Activated B cell treated with CpG ODN at 0.5 μM for 24 hours (primary cell): ENCODE measurements at regions of chr10 and their contacts with region 1.

Region 1: DNA sequence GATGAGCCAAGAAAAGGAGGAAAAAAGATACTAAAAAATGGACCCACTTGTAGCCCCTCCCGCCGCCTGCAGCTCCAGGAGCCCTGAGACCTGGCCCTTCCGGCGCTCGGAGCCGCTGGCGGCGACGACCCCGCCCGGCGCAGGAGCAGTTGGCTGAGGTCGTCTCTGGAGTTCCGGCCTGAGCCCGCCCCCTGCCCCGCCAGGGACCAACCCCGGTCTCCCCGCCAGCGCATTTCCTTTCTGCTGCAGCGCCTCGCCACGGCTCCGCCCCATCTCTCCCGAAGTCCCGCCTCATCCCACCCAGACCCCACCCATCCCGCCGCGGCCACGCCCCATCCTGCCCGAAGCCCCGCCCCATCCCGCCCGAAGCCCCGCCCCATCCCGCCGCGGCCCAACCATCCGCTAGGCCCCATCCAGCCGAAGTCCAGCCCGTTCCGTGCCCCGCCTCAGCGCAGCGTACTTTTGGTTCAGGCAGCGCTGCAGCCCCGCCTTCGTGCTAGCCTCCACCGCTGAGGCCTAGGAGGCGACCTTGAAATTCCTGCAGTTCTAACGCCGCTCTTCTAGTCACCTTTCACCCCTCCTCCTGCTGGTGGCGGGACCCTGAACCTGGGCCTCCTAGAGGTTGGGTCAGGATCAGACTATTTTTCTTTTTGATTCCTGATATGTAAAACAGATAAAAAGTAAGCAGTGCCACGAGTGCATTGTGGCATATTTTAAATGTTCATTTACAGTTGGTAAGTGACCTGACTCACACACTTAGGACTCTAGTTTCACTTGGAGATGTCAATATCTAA is at the start of gene STN1:
- DNase-seq: peak; percentile 91
- ATAC-seq: peak; percentile 94
- H3K4me3 Mint-ChIP-seq: peak within 1 kb of the TSS; percentile 93
- H3K27ac Mint-ChIP-seq: peak within 1 kb of the TSS; percentile 96
- H3K4me1 Mint-ChIP-seq: peaks cover 41% of the 10 kb centered on the region
- H3K27me3 Mint-ChIP-seq: no peaks in the 10 kb centered on the region
- CTCF ChIP-seq: no peak
- total RNA-seq, gene STN1: 14.0 and 14.2 TPM in 2 replicates

Region 2: DNA sequence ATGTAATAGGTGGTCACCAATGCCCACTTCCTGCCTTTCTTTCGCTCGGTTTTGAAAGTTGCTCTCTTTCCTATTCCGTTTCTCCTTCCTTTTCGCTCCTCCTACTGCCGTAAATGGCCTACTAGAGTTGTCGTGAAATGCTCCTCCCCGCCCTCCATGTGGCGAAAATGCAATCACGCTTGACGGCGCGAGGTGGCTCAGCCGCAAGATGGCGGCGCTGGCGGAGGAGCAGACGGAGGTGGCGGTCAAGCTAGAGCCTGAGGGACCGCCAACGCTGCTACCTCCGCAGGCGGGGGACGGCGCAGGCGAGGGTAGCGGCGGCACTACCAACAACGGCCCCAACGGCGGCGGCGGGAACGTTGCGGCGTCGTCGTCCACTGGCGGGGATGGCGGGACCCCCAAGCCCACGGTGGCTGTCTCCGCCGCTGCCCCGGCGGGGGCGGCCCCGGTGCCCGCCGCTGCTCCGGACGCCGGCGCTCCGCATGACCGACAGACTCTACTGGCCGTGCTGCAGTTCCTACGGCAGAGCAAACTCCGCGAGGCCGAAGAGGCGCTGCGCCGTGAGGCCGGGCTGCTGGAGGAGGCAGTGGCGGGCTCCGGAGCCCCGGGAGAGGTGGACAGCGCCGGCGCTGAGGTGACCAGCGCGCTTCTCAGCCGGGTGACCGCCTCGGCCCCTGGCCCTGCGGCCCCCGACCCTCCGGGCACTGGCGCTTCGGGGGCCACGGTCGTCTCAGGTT is 550.3 kb before region 1 on chr10 and contains the start of gene TAF5:
- CTCF ChIA-PET with region 1: no interaction called
- POLR2A ChIA-PET with region 1: no interaction called
- intact Hi-C with region 1: loop called (anchors 5 kb)
- DNase-seq: peak; percentile 79
- ATAC-seq: peak; percentile 72
- H3K4me3 Mint-ChIP-seq: peak within 1 kb of the TSS; percentile 90
- H3K27ac Mint-ChIP-seq: peak within 1 kb of the TSS; percentile 87
- H3K4me1 Mint-ChIP-seq: peaks cover 12% of the 10 kb centered on the region
- H3K27me3 Mint-ChIP-seq: no peaks in the 10 kb centered on the region
- CTCF ChIP-seq: no peak
- total RNA-seq, gene TAF5: 3.6 and 3.8 TPM in 2 replicates

Region 3: GRCh38 chr10:103470761-103471653 is 447.2 kb before region 1 on chr10:
- CTCF ChIA-PET with region 1: no interaction called
- POLR2A ChIA-PET with region 1: no interaction called
- intact Hi-C with region 1: loop called (anchors 5 kb)
- DNase-seq: peak; percentile 70
- ATAC-seq: peak; percentile 76
- H3K4me3 Mint-ChIP-seq: peak overlapping the region; percentile 75
- H3K27ac Mint-ChIP-seq: peak overlapping the region; percentile 96
- H3K4me1 Mint-ChIP-seq: peaks cover 72% of the 10 kb centered on the region
- H3K27me3 Mint-ChIP-seq: no peaks in the 10 kb centered on the region
- CTCF ChIP-seq: no peak

Region 4: GRCh38 chr10:103763374-103764202 is 154.7 kb before region 1 on chr10:
- CTCF ChIA-PET with region 1: no interaction called
- POLR2A ChIA-PET with region 1: no interaction called
- intact Hi-C with region 1: no loop called
- DNase-seq: no peak
- ATAC-seq: peak; percentile 73
- H3K4me3 Mint-ChIP-seq: peak overlapping the region; percentile 8
- H3K27ac Mint-ChIP-seq: no peak overlapping the region
- H3K4me1 Mint-ChIP-seq: peaks cover 26% of the 10 kb centered on the region
- H3K27me3 Mint-ChIP-seq: peaks cover 15% of the 10 kb centered on the region
- CTCF ChIP-seq: no peak

Region 5: GRCh38 chr10:103966671-103967447 is 48.6 kb after region 1 on chr10 and contains the start of gene SLK:
- CTCF ChIA-PET with region 1: no interaction called
- POLR2A ChIA-PET with region 1: interaction called, 8 read pairs
- intact Hi-C with region 1: loop called (anchors 1 kb)
- DNase-seq: peak; percentile 89
- ATAC-seq: peak; percentile 87
- H3K4me3 Mint-ChIP-seq: peak within 1 kb of the TSS; percentile 95
- H3K27ac Mint-ChIP-seq: peak within 1 kb of the TSS; percentile 92
- H3K4me1 Mint-ChIP-seq: peaks cover 42% of the 10 kb centered on the region
- H3K27me3 Mint-ChIP-seq: no peaks in the 10 kb centered on the region
- CTCF ChIP-seq: no peak
- total RNA-seq, gene SLK: 12.8 and 14.0 TPM in 2 replicates

Region 6: GRCh38 chr10:104231784-104232612 is 313.7 kb after region 1 on chr10 and contains the start of gene CFAP43:
- CTCF ChIA-PET with region 1: no interaction called
- POLR2A ChIA-PET with region 1: interaction called, 5 read pairs
- intact Hi-C with region 1: loop called (anchors 1 kb)
- DNase-seq: peak; percentile 96
- ATAC-seq: peak; percentile 100
- H3K4me3 Mint-ChIP-seq: peak within 1 kb of the TSS; percentile 83
- H3K27ac Mint-ChIP-seq: peak within 1 kb of the TSS; percentile 41
- H3K4me1 Mint-ChIP-seq: peaks cover 12% of the 10 kb centered on the region
- H3K27me3 Mint-ChIP-seq: peaks cover 16% of the 10 kb centered on the region
- CTCF ChIP-seq: no peak
- total RNA-seq, gene CFAP43: 0.22 TPM in 1 of 2 replicates, not detected in the other

Region 7: DNA sequence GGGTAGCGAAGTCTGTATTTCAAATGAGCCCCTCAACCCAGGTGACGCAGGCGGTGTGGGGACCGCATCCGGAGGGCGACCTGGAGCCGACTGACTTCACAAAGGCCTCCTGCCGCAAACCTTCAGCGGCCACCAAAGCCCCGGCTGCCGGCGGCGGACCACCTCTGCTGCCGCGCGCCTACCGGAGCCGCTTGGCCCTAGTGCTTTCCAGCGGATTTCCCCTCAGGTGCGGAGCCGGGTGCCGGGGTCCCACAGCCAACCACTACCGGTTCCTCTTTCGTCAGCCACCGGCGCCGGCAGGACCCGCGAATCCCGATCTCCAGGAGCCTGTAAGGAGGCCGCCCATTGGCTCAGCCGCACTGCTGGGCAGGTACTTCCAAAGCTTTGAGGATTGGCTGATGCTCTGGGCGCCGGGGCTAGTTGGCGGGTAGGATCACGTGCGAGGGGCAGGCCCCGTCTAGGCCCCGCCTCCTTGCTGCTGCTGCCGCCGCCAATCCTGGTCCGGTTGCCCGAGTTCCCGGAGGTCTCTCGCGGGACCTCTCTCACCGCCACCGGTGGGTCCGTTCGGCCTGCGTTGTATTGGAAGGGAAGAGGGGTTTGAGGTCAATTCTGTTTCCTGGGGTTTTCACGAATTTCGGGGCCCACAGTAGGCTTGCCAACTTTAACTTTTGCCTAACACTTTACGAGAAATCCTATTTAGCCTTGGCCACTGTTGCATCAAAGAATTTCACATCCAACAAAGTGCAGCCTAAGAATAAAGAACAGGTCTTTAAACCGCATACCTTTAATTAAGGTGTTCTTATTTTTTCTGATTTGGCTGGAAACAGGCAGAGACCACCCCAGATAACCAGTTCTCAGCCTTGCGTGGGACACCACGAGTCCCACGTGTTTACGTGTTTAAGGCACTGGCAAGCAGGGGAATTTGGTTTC is 350.7 kb after region 1 on chr10 and contains the start of gene GSTO2:
- CTCF ChIA-PET with region 1: no interaction called
- POLR2A ChIA-PET with region 1: no interaction called
- intact Hi-C with region 1: loop called (anchors 1 kb)
- DNase-seq: peak; percentile 90
- ATAC-seq: peak; percentile 96
- H3K4me3 Mint-ChIP-seq: peak within 1 kb of the TSS; percentile 91
- H3K27ac Mint-ChIP-seq: peak within 1 kb of the TSS; percentile 95
- H3K4me1 Mint-ChIP-seq: peaks cover 41% of the 10 kb centered on the region
- H3K27me3 Mint-ChIP-seq: peaks cover 1% of the 10 kb centered on the region
- CTCF ChIP-seq: no peak
- total RNA-seq, gene GSTO2: 0.56 and 0.91 TPM in 2 replicates

Region 8: GRCh38 chr10:104337974-104338735 is 419.9 kb after region 1 on chr10 and contains the start of gene ITPRIP:
- CTCF ChIA-PET with region 1: no interaction called
- POLR2A ChIA-PET with region 1: no interaction called
- intact Hi-C with region 1: loop called (anchors 1 kb)
- DNase-seq: peak; percentile 67
- ATAC-seq: peak; percentile 65
- H3K4me3 Mint-ChIP-seq: peak within 1 kb of the TSS; percentile 98
- H3K27ac Mint-ChIP-seq: peak within 1 kb of the TSS; percentile 100
- H3K4me1 Mint-ChIP-seq: peaks cover 55% of the 10 kb centered on the region
- H3K27me3 Mint-ChIP-seq: no peaks in the 10 kb centered on the region
- CTCF ChIP-seq: no peak
- total RNA-seq, gene ITPRIP: 21.3 and 26.1 TPM in 2 replicates